ENCODE measurements at regions of chr17 and their contacts with region 1.

Region 1: DNA sequence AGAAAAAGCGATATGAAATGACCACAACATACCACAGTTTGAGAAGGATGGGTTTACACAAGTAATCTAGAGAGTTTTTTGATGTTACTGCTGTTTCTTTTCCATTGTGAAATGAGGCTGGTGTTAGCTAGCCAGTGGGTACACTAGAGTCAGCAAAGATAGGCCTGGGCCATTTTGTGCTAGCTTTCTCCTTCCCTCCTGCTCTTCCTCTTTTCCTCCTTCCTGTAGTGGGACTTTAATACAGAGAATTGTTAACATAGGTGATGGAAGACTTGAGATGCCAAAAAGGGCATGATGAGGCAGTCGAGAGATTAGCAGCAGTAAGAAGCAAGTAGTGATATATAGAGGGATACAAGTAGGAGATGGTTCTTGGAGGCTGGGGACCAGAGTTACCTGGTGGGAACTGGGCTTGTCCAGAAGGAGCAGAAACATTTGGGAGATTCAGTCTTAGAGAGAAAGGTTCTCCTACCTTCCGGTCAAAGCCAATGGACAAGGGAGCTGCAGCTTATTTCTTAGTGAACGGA is 7.7 kb downstream of the NSRP1 start:
- H3K4me3 Mint-ChIP-seq: no peak overlapping the region
- H3K27ac Mint-ChIP-seq: peak overlapping the region; percentile 48
- H3K4me1 Mint-ChIP-seq: peaks cover 30% of the 10 kb centered on the region
- H3K27me3 Mint-ChIP-seq: no peaks in the 10 kb centered on the region

Region 2: GRCh38 chr17:30074730-30075129 is 49.6 kb before region 1 on chr17:
- intact Hi-C with region 1: no loop called
- H3K4me3 Mint-ChIP-seq: no peak overlapping the region
- H3K27ac Mint-ChIP-seq: no peak overlapping the region
- H3K4me1 Mint-ChIP-seq: no peaks in the 10 kb centered on the region
- H3K27me3 Mint-ChIP-seq: no peaks in the 10 kb centered on the region

Region 3: GRCh38 chr17:30212750-30213149 is 88.4 kb after region 1 on chr17:
- intact Hi-C with region 1: no loop called
- H3K4me3 Mint-ChIP-seq: no peak overlapping the region
- H3K27ac Mint-ChIP-seq: no peak overlapping the region
- H3K4me1 Mint-ChIP-seq: peaks cover 8% of the 10 kb centered on the region
- H3K27me3 Mint-ChIP-seq: peaks cover 14% of the 10 kb centered on the region

Region 4: GRCh38 chr17:30236766-30237165 is 112.4 kb after region 1 on chr17:
- intact Hi-C with region 1: loop called (anchors 5 kb)
- H3K4me3 Mint-ChIP-seq: peak overlapping the region; percentile 60
- H3K27ac Mint-ChIP-seq: no peak overlapping the region
- H3K4me1 Mint-ChIP-seq: peaks cover 40% of the 10 kb centered on the region
- H3K27me3 Mint-ChIP-seq: peaks cover 84% of the 10 kb centered on the region